Vagina (tissue), 2 donors: ENCODE measurements at regions of chr11 and their contacts with region 1.

Region 1: GRCh38 chr11:25794804-25795203 is 537.1 kb upstream of the ANO3 start:
- DNase-seq: no peak
- H3K4me3 ChIP-seq: no peak overlapping the region
- H3K27ac ChIP-seq: no peak overlapping the region
- H3K4me1 ChIP-seq: no peaks in the 10 kb centered on the region
- H3K27me3 ChIP-seq: no peaks in the 10 kb centered on the region
- CTCF ChIP-seq: no peak
- POLR2A ChIP-seq: no peak

Region 2: DNA sequence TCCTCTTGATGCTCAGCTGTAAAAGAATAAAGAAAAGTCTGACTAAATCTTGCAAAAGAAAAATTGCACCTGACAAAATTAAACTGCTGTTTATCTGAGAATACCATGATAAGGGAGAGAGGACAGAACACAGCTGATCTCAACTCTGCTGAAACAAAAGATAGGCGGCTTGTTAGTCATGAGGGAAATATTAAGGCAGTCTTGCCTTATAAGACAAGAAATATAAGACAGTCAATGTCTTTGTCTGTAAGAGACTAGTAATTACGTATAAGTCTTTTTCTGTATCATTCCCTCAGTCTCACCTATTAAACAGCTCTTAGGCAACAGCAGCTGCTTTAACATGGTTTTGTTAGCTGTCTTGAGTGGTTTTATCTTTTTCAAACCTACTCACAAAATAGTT is 1001.3 kb before region 1 on chr11:
- intact Hi-C with region 1: no loop called
- DNase-seq: no peak
- H3K4me3 ChIP-seq: no peak overlapping the region
- H3K27ac ChIP-seq: no peak overlapping the region
- H3K4me1 ChIP-seq: no peaks in the 10 kb centered on the region
- H3K27me3 ChIP-seq: no peaks in the 10 kb centered on the region
- CTCF ChIP-seq: no peak
- POLR2A ChIP-seq: no peak

Region 3: DNA sequence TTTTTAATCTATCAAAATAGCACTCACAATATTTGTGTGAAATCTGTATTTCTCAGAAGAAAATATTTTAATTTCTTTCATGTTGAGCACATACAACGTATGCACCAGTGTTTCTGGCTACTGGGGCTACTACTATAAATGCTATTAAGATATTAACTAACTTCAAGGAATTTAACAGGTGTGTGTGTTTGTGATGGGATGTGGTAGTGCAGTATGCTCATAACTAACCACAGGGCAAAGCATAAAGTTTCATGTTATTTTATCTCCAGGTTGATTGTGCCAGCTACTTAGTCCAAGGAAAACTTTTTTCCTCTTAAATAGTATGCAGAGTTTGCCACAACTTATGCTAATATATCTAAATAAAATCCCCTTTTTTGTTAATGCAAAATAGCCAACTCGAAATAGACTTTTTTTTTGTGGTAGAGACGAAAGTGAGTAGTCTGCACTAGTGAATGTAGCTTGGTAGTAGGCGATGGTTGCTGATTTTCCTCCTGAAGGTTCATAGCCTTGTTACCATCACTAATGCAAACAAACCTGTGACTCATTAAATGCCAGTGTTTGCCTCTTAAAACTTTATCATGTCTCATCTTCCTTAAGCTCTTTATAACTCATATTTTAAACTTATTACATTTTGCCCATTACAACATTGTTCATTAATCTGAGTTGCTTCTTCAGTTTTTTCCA is 28.3 kb before region 1 on chr11:
- intact Hi-C with region 1: loop called (anchors 1 kb)
- DNase-seq: no peak
- H3K4me3 ChIP-seq: no peak overlapping the region
- H3K27ac ChIP-seq: no peak overlapping the region
- H3K4me1 ChIP-seq: no peaks in the 10 kb centered on the region
- H3K27me3 ChIP-seq: no peaks in the 10 kb centered on the region
- CTCF ChIP-seq: no peak
- POLR2A ChIP-seq: no peak